ENCODE measurements at regions of chr16 and their contacts with region 1.

Region 1: GRCh38 chr16:10579965-10580882 is at the start of gene EMP2:
- DNase-seq: peak; percentile 23 to 54
- ATAC-seq: peak; percentile 41 to 49
- H3K4me3 ChIP-seq: peak within 1 kb of the TSS; percentile 80 to 96 (median 88)
- H3K27ac ChIP-seq: peak within 1 kb of the TSS; percentile 87 to 93 (median 88)
- H3K4me1 ChIP-seq: peaks cover 39 to 50% of the 10 kb centered on the region in 2 donors
- H3K27me3 ChIP-seq: no peaks in the 10 kb centered on the region
- CTCF ChIP-seq: peak; percentile 33 to 67 (median 59)
- POLR2A ChIP-seq: peak; percentile 74 to 83
- total RNA-seq, gene EMP2: 7.9 to 13.5 (median 11.7) TPM

Region 2: GRCh38 chr16:9090960-9091866 is 1489.0 kb before region 1 on chr16 and contains the start of gene HAPSTR1:
- in situ Hi-C with region 1: no loop called
- intact Hi-C with region 1: loop called (anchors 10 kb)
- DNase-seq: peak; percentile 100
- ATAC-seq: peak; percentile 91 to 93
- H3K4me3 ChIP-seq: peak within 1 kb of the TSS; percentile 79 to 87 (median 83)
- H3K27ac ChIP-seq: peak within 1 kb of the TSS; percentile 98 to 100 (median 99)
- H3K4me1 ChIP-seq: peaks cover 34 to 42% of the 10 kb centered on the region in 2 donors
- H3K27me3 ChIP-seq: no peaks in the 10 kb centered on the region
- CTCF ChIP-seq: no peak
- POLR2A ChIP-seq: peak; percentile 97 to 99
- total RNA-seq, gene HAPSTR1: 55.0 to 65.0 (median 60.9) TPM

Region 3: GRCh38 chr16:10521681-10522274 is 58.4 kb before region 1 on chr16:
- in situ Hi-C with region 1: loop called in 2 of 4 experiments (anchors 10 kb)
- intact Hi-C with region 1: loop called (anchors 2 kb)
- DNase-seq: peak; percentile 29 to 42
- ATAC-seq: peak; percentile 70 to 86
- H3K4me3 ChIP-seq: no peak overlapping the region
- H3K27ac ChIP-seq: no peak overlapping the region
- H3K4me1 ChIP-seq: no peaks in the 10 kb centered on the region
- H3K27me3 ChIP-seq: no peaks in the 10 kb centered on the region
- CTCF ChIP-seq: peak; percentile 64 to 83 (median 75)
- POLR2A ChIP-seq: no peak

Region 4: GRCh38 chr16:10558746-10559641 is 21.2 kb before region 1 on chr16:
- in situ Hi-C with region 1: no loop called
- intact Hi-C with region 1: loop called (anchors 2 kb)
- DNase-seq: peak; percentile 49 to 65
- ATAC-seq: peak; percentile 77 to 83
- H3K4me3 ChIP-seq: peak overlapping the region; percentile 40 to 52 (median 44)
- H3K27ac ChIP-seq: peak overlapping the region; percentile 82 to 87 (median 84)
- H3K4me1 ChIP-seq: peaks cover 57 to 68% of the 10 kb centered on the region in 2 donors
- H3K27me3 ChIP-seq: no peaks in the 10 kb centered on the region
- CTCF ChIP-seq: no peak
- POLR2A ChIP-seq: peak in 1 of 2 donors; percentile 20

Region 5: DNA sequence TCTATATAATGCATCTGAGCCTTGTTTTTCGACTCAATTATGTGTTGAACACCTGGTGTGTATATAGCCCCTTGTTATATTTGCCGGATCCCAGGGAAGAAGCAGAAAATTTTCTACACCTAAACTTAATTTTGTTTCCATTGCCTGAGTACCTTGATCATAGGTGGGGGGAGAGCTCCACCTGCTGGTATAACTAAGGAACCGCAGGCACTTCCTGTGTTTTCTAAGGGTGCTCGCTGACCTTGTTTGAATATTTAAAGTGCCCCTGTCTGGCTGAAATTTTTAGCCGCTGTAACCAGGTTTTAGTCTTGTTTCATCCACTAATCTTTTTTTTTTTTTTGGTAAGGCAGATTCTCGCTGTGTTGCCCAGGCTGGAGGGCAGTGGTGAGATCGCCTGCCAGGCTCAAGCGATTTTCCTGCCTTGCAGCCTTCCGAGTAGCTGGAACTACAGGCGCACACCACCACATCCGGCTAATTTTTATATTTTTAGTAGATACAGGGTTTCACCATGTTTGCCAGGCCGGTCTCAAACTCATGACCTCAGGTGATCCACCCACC is 156.9 kb after region 1 on chr16:
- in situ Hi-C with region 1: no loop called
- intact Hi-C with region 1: loop called (anchors 2 kb)
- DNase-seq: peak; percentile 36 to 63
- ATAC-seq: peak; percentile 49
- H3K4me3 ChIP-seq: peak overlapping the region in 2 of 4 donors; percentile 21 to 44
- H3K27ac ChIP-seq: peak overlapping the region; percentile 84 to 95 (median 88)
- H3K4me1 ChIP-seq: peaks cover 16 to 22% of the 10 kb centered on the region in 2 donors
- H3K27me3 ChIP-seq: no peaks in the 10 kb centered on the region
- CTCF ChIP-seq: peak; percentile 93 to 96 (median 93)
- POLR2A ChIP-seq: no peak

Measured in gastrocnemius medialis (tissue), 4 donors.